Activated B cell treated with CpG ODN at 0.5 μM for 24 hours (primary cell): ENCODE measurements at regions of chrX and their contacts with region 1.

Region 1: GRCh38 chrX:150752124-150752523 is 58.9 kb downstream of the MTMR1 start:
- DNase-seq: no peak
- ATAC-seq: no peak
- H3K4me3 Mint-ChIP-seq: no peak overlapping the region
- H3K27ac Mint-ChIP-seq: no peak overlapping the region
- H3K4me1 Mint-ChIP-seq: peaks cover 4% of the 10 kb centered on the region
- H3K27me3 Mint-ChIP-seq: no peaks in the 10 kb centered on the region
- CTCF ChIP-seq: no peak

Region 2: DNA sequence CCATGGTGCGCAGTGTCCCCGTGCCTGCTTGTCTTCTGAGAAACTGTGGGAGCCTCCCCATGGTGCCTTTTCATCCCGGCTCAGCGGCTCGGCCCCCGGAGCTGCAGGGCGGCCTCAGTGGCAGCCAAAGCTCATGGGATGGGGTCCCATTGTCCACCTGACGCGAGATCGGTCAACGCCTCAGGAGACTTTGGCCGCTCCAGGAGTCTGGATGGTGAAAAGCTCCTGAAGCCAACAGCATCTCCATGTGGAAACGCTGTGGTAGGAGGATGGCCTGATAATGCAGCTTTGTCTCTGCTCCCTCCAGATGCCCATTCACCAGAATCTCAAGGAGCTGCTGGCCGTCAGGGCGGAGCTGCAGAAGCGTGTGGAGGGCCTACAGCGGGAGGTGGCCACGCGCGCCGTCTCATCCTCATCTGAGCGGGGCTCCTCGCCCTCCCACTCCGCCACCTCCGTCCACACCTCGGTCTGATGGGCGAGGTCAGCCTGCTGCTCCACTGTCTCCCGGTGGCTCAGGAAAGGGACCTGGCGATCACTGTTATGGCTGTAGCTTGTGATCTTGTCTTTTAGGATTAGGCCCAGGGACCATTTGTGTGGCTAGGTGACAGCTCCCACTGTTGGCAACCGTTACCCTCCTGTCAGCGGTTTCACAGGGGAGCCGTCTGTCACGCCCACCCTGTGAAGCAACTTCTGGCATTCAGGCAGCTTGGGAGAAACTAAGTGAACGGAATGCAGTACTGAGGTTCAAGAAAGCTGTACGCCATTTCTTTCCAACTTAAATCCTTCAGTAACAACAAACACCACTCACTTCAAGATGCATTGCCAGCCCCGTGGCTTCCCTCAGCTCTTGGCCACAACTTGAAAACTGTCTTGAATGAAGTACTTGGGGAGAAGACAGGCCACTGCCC is 10.4 kb after region 1 on chrX:
- CTCF ChIA-PET with region 1: no interaction called
- POLR2A ChIA-PET with region 1: interaction called, 11 read pairs
- intact Hi-C with region 1: no loop called
- DNase-seq: no peak
- ATAC-seq: no peak
- H3K4me3 Mint-ChIP-seq: no peak overlapping the region
- H3K27ac Mint-ChIP-seq: no peak overlapping the region
- H3K4me1 Mint-ChIP-seq: no peaks in the 10 kb centered on the region
- H3K27me3 Mint-ChIP-seq: no peaks in the 10 kb centered on the region
- CTCF ChIP-seq: no peak